ENCODE measurements at regions of chr2 and their contacts with region 1.

Region 1: DNA sequence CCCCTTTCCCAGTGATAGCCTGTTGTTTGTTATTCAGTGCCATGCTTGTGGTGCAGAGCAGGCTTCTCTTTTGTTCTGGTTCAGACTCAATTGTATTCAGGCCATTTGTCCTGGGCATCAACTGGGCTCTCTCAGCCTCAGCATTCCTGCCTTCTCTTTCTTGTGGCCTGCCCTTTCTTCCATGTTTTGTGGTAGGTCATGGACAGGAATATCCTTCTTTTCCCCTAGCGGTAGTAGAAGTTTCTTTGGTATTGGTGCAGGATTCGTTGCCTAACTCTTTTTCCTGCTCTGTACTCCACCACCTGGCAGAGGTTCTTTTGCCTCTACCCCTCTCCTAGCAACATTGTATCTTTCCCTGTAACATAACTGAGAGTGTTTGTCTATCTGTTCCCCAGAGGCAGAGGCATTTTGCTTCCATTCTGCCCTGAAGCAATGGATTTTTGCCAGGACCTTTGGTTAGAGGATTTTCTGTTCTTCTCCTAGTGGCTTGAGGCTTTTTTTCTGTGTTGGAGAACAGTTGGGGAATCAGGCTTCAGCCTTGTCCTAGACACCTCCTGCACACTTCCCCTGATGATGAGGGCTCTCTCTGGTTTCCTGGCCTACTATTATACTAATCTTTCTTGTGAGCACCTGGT is 68.5 kb downstream of the NCOA1 start:
- DNase-seq: no peak
- H3K4me3 ChIP-seq: no peak overlapping the region
- H3K27ac ChIP-seq: no peak overlapping the region
- H3K4me1 ChIP-seq: peaks cover 0 to 4% of the 10 kb centered on the region in 2 donors
- H3K27me3 ChIP-seq: no peaks in the 10 kb centered on the region
- CTCF ChIP-seq: no peak

Region 2: DNA sequence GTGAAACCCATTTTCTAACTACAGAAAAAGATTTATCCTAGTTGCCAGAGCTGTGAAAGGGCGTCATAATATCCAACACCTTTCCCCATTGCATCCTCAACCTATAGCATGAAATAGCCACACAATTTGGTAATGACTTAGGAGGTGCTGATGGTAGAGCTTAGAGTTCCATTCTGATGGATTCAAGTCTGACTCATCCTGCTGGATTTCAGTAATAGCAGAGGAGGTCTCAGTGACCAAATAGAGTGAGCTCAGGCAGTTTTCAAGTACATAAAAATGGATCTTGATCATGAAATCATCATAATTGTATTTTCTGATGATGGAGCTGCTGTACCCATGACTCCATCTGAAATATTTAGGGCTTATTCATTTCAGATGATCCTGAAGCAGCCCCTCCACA is 1445.3 kb before region 1 on chr2:
- intact Hi-C with region 1: no loop called
- DNase-seq: no peak
- H3K4me3 ChIP-seq: no peak overlapping the region
- H3K27ac ChIP-seq: no peak overlapping the region
- H3K4me1 ChIP-seq: no peaks in the 10 kb centered on the region
- H3K27me3 ChIP-seq: no peaks in the 10 kb centered on the region
- CTCF ChIP-seq: no peak

Region 3: GRCh38 chr2:24509425-24509824 is 50.2 kb before region 1 on chr2:
- intact Hi-C with region 1: no loop called
- DNase-seq: no peak
- H3K4me3 ChIP-seq: no peak overlapping the region
- H3K27ac ChIP-seq: no peak overlapping the region
- H3K4me1 ChIP-seq: peaks cover 5 to 22% of the 10 kb centered on the region in 2 donors
- H3K27me3 ChIP-seq: no peaks in the 10 kb centered on the region
- CTCF ChIP-seq: no peak

Region 4: DNA sequence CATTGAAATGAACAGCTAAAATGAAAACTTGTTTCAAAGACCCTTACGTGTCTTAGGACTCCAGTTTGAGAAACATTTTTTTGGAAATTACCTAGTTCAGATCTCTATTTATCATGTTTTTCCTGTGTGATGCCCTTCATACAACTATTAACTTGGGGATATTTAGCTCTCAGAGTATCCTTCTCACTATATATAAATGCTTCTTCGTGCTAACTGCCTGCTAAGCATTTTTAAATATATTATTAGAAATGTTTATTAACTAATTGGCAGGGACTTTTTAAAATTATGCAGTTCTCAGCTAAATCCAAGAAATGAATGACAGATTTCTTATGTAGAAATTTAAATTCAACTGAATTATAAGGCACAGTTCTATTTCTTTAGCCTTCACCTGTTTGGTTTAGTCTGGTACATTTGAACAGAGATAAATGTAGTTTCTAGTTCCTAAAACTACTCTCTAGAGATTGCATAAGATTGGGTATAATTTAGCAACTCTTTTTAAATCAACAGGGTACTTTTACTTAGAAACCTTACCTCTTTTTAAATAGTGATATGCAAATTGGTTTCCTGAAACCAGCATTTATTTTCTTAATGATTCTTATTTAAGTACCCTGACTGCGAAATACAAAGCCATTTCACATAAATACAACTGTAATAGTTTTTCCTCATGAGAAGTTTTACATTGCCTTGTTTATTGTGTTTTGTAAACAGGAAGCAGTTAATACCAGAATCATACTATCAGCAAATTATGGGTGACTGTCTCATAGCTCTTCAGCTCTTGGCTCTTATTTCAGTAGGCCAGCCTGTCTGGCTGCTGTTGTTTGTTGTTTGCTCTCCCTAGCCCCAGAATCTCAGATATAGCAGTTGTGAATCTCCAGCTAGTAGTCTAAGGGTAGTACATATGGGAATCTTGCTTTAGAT is 92.9 kb after region 1 on chr2:
- intact Hi-C with region 1: loop called (anchors 10 kb)
- DNase-seq: no peak
- H3K4me3 ChIP-seq: no peak overlapping the region
- H3K27ac ChIP-seq: no peak overlapping the region
- H3K4me1 ChIP-seq: no peaks in the 10 kb centered on the region
- H3K27me3 ChIP-seq: no peaks in the 10 kb centered on the region
- CTCF ChIP-seq: no peak

Region 5: DNA sequence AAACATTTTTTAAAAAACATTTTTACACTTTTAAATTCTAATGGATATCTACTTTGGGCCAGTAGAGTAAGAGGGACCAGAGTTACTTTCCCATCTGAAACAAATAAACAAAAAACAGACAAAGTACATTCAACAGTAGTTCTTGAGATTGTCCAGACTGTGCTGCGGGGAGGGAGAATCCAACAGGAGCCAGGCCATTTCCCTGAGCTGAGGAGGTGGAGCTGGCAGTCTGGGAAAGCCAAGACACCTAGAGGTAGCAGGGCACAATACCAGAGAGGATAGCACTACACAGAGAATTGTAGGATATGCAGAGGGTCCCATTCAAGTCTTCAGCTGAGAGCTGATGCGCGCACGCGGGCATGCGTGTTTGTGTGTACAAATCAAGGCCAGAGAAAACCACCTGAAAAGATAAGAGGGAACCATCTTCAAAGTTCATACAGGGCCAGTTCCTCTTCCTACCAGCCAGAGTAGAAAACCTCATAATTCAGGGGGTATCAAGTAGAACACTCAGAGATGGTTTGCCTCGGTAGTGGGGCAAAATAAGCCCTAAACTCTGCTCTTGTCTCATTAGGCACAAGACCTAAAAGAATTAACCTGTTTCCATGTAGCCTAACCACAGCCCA is 189.6 kb after region 1 on chr2:
- intact Hi-C with region 1: no loop called
- DNase-seq: no peak
- H3K4me3 ChIP-seq: no peak overlapping the region
- H3K27ac ChIP-seq: no peak overlapping the region
- H3K4me1 ChIP-seq: no peaks in the 10 kb centered on the region
- H3K27me3 ChIP-seq: no peaks in the 10 kb centered on the region
- CTCF ChIP-seq: no peak

Measured in ascending aorta (tissue), 2 donors.